ENCODE measurements at regions of chr12 and their contacts with region 1.

Region 1: DNA sequence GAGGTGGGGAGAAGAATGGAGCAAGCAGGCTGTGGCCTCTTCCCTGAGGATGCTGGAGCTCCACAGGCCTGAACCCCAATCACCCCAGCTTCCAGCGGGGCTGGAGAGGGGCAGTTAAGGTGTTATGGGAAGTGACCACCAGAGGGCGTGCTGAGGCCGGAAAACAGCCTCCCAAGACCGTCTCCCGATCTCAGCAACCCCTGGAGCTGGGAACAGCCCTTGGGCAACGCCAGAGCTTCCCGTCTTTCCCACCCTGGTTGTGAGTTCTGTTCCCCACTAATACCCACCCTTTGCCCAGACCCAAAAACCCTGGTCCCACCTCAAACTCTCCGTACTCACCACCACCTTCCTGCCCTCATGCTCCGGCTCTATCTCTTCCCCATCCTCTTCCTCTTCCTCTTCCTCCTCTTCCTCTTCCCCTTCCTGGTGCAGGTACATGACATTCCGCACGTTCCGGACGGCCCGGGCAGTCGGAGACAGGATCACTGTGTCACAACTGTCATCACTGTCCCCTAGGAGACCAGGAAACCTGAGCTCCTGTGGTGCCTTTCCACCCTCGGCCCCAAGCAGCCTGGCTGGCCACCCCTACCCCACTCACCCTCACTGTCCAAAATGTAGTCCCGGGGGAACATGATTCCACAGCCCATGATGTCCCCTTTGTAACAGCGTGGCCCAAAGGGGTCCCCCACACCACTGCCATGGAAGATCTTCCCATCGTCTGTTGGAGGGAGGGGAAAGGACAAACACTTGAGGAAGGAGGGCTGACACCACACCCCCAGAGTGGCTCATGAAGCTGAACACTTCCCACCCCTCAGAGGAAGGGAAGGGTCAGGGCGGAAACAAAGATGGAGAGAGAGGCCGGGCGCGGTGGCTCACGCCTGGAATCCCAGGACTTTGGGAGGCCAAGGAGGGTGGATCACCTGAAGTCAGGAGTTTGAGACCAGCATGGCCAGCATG is 12.9 kb downstream of the SPRYD3 start:
- DNase-seq: peak; percentile 75
- H3K4me3 Mint-ChIP-seq: no peak overlapping the region
- H3K27ac Mint-ChIP-seq: peak overlapping the region; percentile 54
- H3K4me1 Mint-ChIP-seq: peaks cover 20% of the 10 kb centered on the region
- H3K27me3 Mint-ChIP-seq: no peaks in the 10 kb centered on the region
- CTCF ChIP-seq: peak; percentile 77

Region 2: DNA sequence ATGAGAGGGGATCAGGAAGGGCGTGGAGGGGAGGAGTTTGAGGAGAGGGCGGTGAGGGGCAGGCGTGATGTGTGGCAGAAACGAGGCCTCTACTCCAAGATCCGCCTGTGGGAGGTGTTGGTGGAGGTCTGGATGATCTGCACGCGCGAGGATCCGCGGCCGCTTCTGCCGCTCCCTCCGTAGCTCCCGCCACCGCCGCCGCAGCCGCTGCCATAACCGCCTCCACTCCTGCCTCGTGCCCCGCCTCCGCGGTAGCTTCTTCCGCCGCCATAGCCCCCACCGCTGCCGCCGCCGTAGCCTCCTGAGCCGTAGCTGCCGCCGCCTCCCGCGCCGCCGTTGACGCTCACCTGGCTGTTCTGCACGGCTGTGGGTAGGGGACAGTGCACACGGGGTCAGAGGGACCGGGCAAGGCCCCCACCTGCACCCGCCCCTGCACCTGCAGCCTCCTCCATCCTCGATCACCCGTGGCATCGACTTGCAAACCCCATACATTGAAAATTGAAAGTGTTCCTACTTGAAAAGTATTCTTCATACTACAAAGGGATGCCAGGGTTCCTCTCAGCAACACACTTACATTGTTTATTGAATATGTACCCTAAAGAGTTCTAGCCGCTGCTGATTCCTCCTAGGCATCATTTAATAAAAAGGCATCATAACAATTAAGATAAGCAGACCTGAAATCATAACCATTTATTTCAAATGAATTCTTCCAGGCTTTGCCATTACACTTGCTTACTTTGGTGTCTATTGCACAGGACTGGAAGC is 375.0 kb before region 1 on chr12:
- CTCF ChIA-PET with region 1: no interaction called
- intact Hi-C with region 1: no loop called
- DNase-seq: peak; percentile 13
- H3K4me3 Mint-ChIP-seq: peak overlapping the region; percentile 50
- H3K27ac Mint-ChIP-seq: no peak overlapping the region
- H3K4me1 Mint-ChIP-seq: peaks cover 26% of the 10 kb centered on the region
- H3K27me3 Mint-ChIP-seq: peaks cover 95% of the 10 kb centered on the region
- CTCF ChIP-seq: no peak

Region 3: DNA sequence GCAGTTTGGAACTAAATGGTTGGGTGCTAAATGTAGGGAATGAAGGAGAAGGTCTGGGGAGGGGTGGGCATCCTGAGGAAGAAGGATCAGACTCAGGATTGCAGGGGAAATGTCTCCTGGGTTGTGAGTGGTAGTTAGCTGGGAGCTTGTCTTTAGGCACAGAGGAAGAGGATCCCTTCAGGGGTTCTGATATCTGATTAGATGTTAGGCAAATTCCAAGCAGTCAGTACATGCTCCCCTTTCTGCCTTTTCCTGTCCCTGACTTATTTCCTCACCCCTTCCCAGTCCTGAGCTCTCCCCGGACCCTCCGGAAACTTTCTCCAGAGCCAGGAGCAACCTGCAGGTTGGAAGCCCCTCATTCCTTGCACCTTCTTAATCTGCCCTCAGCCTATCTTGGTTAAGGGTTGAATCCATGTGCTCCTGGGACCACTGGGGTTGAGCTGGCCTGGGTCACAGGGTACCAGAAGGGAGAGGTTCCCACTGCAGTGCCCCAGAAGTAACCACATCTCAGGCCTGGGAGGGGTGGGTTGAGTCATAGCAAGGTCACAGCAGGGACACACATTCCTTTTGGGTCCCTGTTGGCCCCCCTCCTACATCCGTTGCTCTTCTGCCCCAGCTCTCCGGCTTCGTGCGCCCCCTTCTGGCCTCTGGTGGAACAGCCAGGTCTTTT is 32.9 kb after region 1 on chr12:
- CTCF ChIA-PET with region 1: interaction called, 39 read pairs
- intact Hi-C with region 1: loop called (anchors 2 kb)
- DNase-seq: peak; percentile 87
- H3K4me3 Mint-ChIP-seq: peak overlapping the region; percentile 81
- H3K27ac Mint-ChIP-seq: peak overlapping the region; percentile 84
- H3K4me1 Mint-ChIP-seq: peaks cover 32% of the 10 kb centered on the region
- H3K27me3 Mint-ChIP-seq: no peaks in the 10 kb centered on the region
- CTCF ChIP-seq: peak; percentile 80

Region 4: GRCh38 chr12:53115112-53115890 is 49.0 kb after region 1 on chr12:
- CTCF ChIA-PET with region 1: no interaction called
- intact Hi-C with region 1: no loop called
- DNase-seq: no peak
- H3K4me3 Mint-ChIP-seq: no peak overlapping the region
- H3K27ac Mint-ChIP-seq: no peak overlapping the region
- H3K4me1 Mint-ChIP-seq: no peaks in the 10 kb centered on the region
- H3K27me3 Mint-ChIP-seq: peaks cover 19% of the 10 kb centered on the region
- CTCF ChIP-seq: no peak

Region 5: GRCh38 chr12:53129170-53129569 is 62.9 kb after region 1 on chr12:
- CTCF ChIA-PET with region 1: no interaction called
- intact Hi-C with region 1: no loop called
- DNase-seq: no peak
- H3K4me3 Mint-ChIP-seq: no peak overlapping the region
- H3K27ac Mint-ChIP-seq: no peak overlapping the region
- H3K4me1 Mint-ChIP-seq: no peaks in the 10 kb centered on the region
- H3K27me3 Mint-ChIP-seq: peaks cover 47% of the 10 kb centered on the region
- CTCF ChIP-seq: no peak

Region 6: GRCh38 chr12:53180220-53180930 is 114.1 kb after region 1 on chr12 and contains the starts of genes CSAD and ZNF740:
- CTCF ChIA-PET with region 1: interaction called, 11 read pairs
- intact Hi-C with region 1: no loop called
- DNase-seq: peak; percentile 94
- H3K4me3 Mint-ChIP-seq: peak within 1 kb of the TSS; percentile 85
- H3K27ac Mint-ChIP-seq: peak within 1 kb of the TSS; percentile 77
- H3K4me1 Mint-ChIP-seq: peaks cover 23% of the 10 kb centered on the region
- H3K27me3 Mint-ChIP-seq: no peaks in the 10 kb centered on the region
- CTCF ChIP-seq: no peak
- total RNA-seq, gene CSAD: 12.2 and 24.0 TPM in 2 replicates
- total RNA-seq, gene ZNF740: 30.3 and 32.7 TPM in 2 replicates

Region 7: DNA sequence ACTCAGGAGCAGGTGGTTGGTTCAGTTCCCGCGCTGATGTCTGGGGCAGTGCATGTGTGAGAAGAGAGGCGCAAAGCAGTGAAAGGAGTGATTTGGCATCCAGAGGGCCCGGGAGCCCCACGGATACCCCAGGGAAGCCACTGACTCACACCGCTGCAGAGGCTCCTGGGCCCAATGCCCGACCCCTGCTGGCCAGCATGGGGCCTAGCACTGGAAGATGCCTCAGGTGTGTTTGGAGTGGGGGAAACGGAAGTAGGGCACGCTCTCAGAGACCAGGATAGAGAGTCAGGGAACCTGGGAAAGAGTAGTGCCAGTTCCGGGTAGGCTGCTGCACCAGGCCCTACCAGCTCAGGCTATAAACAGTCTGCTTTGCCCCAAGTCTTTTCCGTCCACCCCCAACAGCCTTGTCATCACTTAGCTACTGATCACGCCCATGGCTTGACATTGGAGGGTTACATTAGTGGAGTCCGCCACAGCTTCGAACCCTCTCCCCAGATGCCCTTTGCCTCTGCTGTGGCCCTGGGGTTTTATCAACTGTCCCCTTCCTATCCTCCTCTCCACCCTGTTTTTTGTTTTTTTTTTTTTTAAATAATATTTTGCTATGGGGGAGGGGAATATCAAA is 124.0 kb after region 1 on chr12:
- CTCF ChIA-PET with region 1: interaction called, 4 read pairs
- intact Hi-C with region 1: loop called (anchors 5 kb)
- DNase-seq: peak; percentile 43
- H3K4me3 Mint-ChIP-seq: no peak overlapping the region
- H3K27ac Mint-ChIP-seq: no peak overlapping the region
- H3K4me1 Mint-ChIP-seq: no peaks in the 10 kb centered on the region
- H3K27me3 Mint-ChIP-seq: no peaks in the 10 kb centered on the region
- CTCF ChIP-seq: peak; percentile 70

Measured in Calu3 (cell line).